HAP-1 (cell line): ENCODE measurements at regions of chr20 and their contacts with region 1.

Region 1: GRCh38 chr20:35269055-35269781 is 8.7 kb downstream of the MMP24OS start:
- DNase-seq: peak; percentile 74 to 91
- H3K4me3 ChIP-seq: no peak overlapping the region
- H3K4me1 ChIP-seq: peaks cover 8% of the 10 kb centered on the region
- H3K27me3 ChIP-seq: no peaks in the 10 kb centered on the region

Region 2: DNA sequence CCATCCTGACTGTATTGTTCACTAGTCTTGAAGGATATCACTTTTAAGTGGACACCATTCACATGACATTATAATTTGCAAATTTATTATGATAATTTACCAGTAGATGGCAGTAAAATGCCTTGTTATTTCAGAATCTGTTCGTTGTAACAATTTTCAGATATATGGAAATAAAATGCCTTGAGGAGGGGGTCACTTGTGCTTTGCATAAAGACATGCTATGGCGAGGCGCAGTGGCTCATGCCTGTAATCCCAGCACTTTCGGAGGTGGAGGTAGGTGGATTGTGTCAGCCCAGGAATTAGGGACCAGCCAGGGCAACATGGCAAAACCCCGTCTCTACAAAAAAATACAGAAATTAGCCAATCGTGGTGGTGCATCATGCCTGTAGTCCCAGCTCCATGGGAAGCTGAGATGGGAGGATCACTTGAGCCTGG is 434.7 kb before region 1 on chr20:
- in situ Hi-C with region 1: loop called (anchors 5 kb)
- DNase-seq: peak in 1 of 2 experiments; percentile 74
- H3K4me3 ChIP-seq: no peak overlapping the region
- H3K4me1 ChIP-seq: peaks cover 7% of the 10 kb centered on the region
- H3K27me3 ChIP-seq: peaks cover 3% of the 10 kb centered on the region

Region 3: DNA sequence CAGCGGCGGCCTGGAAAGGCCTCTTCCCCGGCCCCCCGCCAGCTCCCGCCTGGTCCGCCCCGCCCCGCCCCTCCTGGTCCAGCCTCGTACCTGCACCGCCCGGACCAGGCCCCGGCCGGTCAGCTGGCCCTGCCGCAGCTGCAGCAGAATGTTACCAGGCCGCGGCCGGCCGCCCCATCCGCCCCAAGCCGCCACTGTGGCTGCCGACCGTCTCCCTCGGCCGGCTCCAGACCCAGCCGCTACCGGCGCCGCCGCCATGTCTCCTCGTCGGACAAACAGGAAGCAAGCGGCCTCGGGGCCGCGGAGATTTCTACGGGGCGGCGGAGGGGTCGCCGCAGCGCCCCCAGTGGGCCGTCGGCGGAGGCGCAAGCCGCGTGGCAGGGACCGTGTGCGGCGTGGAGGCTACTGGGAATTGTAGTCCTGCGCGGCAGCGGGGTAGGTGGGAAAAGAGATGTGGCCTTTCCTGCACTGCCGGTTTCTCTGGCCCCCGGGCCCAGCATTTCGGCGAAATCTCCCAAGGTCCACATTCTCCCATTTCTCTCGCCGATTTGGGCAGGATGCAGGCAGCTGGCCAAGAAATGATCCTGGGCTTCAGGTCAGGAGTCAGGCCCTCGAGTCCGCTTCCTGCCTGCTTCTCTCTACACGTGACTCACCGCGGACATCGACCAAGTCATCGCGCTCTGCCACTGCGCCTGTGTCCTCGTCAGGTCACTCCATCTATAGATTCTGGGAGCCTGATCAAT is 176.5 kb before region 1 on chr20 and contains the start of gene TRPC4AP:
- in situ Hi-C with region 1: loop called (anchors 5 kb)
- DNase-seq: peak; percentile 90
- H3K4me3 ChIP-seq: peak within 1 kb of the TSS; percentile 74
- H3K4me1 ChIP-seq: peaks cover 27% of the 10 kb centered on the region
- H3K27me3 ChIP-seq: no peaks in the 10 kb centered on the region

Region 4: GRCh38 chr20:35146920-35147574 is 122.2 kb before region 1 on chr20 and contains the start of gene EDEM2:
- in situ Hi-C with region 1: loop called (anchors 5 kb)
- DNase-seq: peak; percentile 93 to 96
- H3K4me3 ChIP-seq: peak within 1 kb of the TSS; percentile 63
- H3K4me1 ChIP-seq: peaks cover 6% of the 10 kb centered on the region
- H3K27me3 ChIP-seq: no peaks in the 10 kb centered on the region

Region 5: DNA sequence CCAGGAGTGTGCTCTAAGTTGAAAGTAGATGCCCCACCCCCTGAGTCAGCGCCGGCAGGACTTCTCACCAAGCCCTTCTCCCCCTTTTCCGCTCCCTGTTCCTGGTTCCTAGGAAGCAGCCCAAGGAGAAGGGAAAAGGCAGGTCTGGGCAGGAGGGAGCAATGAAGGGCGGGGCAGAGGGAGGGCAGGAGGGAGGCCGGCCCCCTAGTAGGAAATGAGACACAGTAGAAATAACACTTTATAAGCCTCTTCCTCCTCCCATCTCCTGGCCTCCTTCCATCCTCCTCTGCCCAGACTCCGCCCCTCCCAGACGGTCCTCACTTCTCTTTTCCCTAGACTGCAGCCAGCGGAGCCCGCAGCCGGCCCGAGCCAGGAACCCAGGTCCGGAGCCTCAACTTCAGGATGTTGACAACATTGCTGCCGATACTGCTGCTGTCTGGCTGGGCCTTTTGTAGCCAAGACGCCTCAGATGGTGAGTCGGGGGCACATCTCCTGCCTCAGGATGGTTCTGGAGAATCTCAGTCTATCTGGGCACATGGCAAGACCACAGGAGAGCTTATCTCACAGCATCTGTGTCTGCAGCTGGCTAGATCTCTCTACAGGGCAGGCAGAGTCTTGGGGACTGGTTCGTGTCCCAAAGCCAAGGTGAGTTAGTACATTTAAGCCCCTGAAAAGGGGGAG is 97.3 kb before region 1 on chr20 and contains the start of gene PROCR:
- in situ Hi-C with region 1: no loop called
- DNase-seq: peak; percentile 95 to 97
- H3K4me3 ChIP-seq: peak within 1 kb of the TSS; percentile 38
- H3K4me1 ChIP-seq: peaks cover 4% of the 10 kb centered on the region
- H3K27me3 ChIP-seq: no peaks in the 10 kb centered on the region